ENCODE measurements at regions of chr2 and their contacts with region 1.

Region 1: DNA sequence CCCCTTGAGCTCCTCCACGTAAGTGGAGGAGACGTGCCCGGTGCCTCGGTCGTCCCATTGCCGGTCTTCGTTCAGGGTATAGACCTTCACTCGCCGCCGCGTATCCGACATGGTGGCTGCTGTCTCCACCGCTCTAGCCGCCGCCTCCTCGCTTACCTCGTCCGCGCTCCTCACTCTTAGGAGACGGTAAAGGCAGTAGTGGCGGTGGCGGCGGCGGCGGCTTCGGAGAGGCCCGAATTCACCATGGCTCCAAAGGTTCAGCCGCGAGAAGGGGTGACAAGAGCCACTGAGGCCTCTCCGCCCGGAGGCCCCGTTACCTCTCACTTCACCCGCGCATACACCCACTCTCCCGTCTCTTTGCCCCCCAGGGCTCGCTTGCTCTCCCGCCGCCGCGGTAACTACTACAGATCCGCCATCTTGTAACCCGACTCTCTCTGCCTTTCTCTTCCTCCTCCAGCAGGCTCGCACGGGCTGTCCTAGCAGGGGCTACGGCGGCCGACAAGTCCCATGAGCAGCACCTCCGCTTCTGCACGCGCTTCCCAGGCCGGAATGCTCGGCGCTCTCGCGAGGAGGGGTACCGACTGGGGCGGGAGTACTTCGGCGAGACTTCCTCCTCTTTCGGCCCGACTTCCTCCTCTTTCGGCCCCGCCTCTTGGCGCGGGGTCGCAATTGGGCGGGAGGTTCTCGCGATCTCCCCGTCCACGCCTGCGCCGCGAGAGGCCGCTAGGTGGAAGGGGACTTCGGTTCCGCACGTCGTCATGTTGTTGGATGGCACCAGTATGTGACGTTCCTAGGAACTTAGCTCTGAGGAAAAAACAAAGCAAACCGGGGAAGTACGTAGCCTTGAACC is at the start of gene PPP4R3B:
- DNase-seq: peak; percentile 98
- ATAC-seq: peak; percentile 84
- H3K4me3 ChIP-seq: peak within 1 kb of the TSS; percentile 81 to 87
- H3K27ac ChIP-seq: peak within 1 kb of the TSS; percentile 88
- H3K4me1 ChIP-seq: peaks cover 5 to 11% of the 10 kb centered on the region in 2 experiments
- H3K27me3 ChIP-seq: no peaks in the 10 kb centered on the region
- CTCF ChIP-seq: peak in 1 of 3 experiments; percentile 30; a peak in 1 of 6 replicates
- POLR2A ChIP-seq: peak; percentile 71
- RAD21 ChIP-seq: no peak
- total RNA-seq, gene PPP4R3B: 40.8 TPM

Region 2: GRCh38 chr2:55232084-55232862 is 385.1 kb before region 1 on chr2 and contains the starts of genes CLHC1 and RPS27A:
- CTCF ChIA-PET with region 1: no interaction called
- POLR2A ChIA-PET with region 1: no interaction called
- RAD21 ChIA-PET with region 1: no interaction called
- intact Hi-C with region 1: loop called (anchors 2 kb)
- DNase-seq: peak; percentile 98
- ATAC-seq: peak; percentile 89
- H3K4me3 ChIP-seq: peak within 1 kb of the TSS; percentile 77 to 91
- H3K27ac ChIP-seq: peak within 1 kb of the TSS; percentile 98
- H3K4me1 ChIP-seq: peaks cover 8 to 21% of the 10 kb centered on the region in 2 experiments
- H3K27me3 ChIP-seq: no peaks in the 10 kb centered on the region
- CTCF ChIP-seq: no peak
- POLR2A ChIP-seq: peak; percentile 73
- RAD21 ChIP-seq: no peak
- total RNA-seq, gene CLHC1: 11.1 TPM
- total RNA-seq, gene RPS27A: 1,291 TPM

Region 3: DNA sequence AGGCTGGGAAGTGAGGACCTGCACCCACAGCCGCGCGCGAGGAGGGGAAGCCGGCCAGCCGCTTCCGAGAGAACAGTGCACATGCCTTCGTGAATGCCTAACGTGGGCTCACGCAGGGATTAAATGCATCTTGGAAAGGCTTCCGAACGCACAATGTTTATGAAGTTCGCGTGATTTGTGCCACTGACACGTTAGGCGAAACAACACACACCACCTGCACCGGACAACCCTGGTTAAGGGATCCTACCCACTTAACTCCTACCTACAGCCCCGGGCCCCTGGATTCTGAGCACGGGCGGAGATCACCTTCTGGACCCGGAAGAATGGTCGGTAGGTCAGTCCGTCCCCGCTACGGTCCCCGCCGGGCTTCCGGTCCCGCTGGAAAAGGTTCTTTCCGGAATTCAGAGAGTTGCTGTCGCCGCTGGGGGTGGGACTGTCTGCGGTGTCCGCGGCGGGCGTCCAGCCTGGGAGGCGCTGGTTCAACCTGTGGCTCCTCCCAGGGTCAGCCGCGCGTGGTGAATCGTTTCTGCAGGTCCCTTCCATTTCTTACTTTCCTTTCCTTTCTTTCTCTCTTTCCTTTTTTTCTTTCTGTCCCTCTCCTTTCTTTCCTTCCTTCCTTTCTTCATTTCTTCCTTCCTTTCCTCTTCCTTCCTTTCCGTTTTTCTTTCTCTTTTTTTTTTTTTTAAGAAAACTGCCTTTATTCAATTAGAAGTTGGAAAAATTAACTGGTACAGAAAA is 348.3 kb before region 1 on chr2 and contains the start of gene MTIF2:
- CTCF ChIA-PET with region 1: no interaction called
- POLR2A ChIA-PET with region 1: no interaction called
- RAD21 ChIA-PET with region 1: no interaction called
- intact Hi-C with region 1: loop called (anchors 2 kb)
- DNase-seq: peak; percentile 90
- ATAC-seq: peak; percentile 98
- H3K4me3 ChIP-seq: peak within 1 kb of the TSS; percentile 92 to 97
- H3K27ac ChIP-seq: peak within 1 kb of the TSS; percentile 65
- H3K4me1 ChIP-seq: peaks cover 0 to 11% of the 10 kb centered on the region in 2 experiments; a peak in 1 of 4 replicates
- H3K27me3 ChIP-seq: no peaks in the 10 kb centered on the region
- CTCF ChIP-seq: peak in 1 of 3 experiments; percentile 11; a peak in 1 of 6 replicates
- POLR2A ChIP-seq: peak; percentile 92
- RAD21 ChIP-seq: peak; percentile 36; the same call in 1 of the 2 replicates
- total RNA-seq, gene MTIF2: 49.8 TPM

Region 4: DNA sequence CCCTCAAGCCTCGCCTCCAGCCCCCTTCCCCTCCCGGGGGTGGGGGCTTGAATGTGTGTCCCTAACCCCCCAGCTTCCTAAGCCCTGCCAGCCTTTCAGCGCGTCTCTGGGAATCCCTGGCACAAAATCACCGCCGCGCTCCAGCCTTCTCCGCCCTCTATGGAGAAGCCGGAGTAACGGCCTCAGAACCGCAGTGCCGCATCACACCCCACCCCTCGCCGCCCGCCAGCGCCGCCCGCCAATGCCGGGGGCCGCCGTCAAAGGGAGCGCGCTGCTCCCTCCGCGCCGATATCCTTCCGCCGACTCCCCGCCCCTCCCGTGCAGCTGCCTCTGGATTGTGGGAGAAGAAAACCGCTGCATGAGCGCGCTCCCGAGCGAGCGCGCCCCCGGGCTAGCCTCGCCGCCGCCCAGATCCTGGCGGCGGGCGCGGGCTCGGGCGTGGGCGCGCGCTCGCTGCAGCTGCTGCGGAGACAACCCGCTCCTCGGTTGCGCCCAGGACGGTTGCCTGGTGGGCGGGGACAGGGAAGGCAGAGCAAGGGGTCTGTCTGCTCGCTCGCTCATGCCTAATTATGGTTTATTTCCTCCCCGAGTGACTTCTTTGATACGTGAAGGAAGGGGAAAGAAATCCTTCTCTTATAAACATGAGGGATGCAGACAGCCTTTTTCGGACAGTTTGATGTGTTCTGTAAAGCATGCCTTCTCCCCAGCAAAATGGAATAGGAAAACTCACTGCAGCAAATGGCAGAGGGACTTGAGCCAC is 197.5 kb before region 1 on chr2 and contains the start of gene CCDC88A:
- CTCF ChIA-PET with region 1: no interaction called
- POLR2A ChIA-PET with region 1: no interaction called
- RAD21 ChIA-PET with region 1: no interaction called
- intact Hi-C with region 1: loop called (anchors 5 kb)
- DNase-seq: peak; percentile 91
- ATAC-seq: peak; percentile 86
- H3K4me3 ChIP-seq: peak within 1 kb of the TSS; percentile 71 to 76
- H3K27ac ChIP-seq: peak within 1 kb of the TSS; percentile 63
- H3K4me1 ChIP-seq: peaks cover 4 to 16% of the 10 kb centered on the region in 2 experiments; a peak in 2 of 4 replicates
- H3K27me3 ChIP-seq: no peaks in the 10 kb centered on the region
- CTCF ChIP-seq: 0 out of 6 replicates have a peak, but pooled peaks of 1 of the 3 experiments have one; percentile 10
- POLR2A ChIP-seq: peak; percentile 89
- RAD21 ChIP-seq: peak; percentile 31; the same call in 1 of the 2 replicates
- total RNA-seq, gene CCDC88A: 27.2 TPM

Region 5: DNA sequence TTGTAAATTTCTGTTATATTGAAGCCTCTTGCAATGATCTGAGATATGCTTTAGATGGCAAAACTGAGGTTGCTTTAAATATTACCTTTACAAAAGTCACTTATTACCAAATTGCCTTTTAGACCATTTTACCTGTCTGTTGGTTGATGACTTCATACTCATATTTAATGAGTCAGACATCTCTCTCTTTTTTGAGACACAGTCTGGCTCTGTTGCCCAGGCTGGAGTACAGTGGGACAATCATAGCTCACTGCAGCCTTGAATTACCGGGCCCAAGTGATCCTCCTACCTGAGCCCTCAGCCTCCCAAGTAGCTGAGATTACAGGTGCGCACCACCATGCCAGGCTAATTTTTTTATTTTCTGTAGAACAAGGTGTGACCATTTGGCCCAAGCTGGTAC is 11.5 kb after region 1 on chr2:
- CTCF ChIA-PET with region 1: no interaction called
- POLR2A ChIA-PET with region 1: no interaction called
- RAD21 ChIA-PET with region 1: no interaction called
- intact Hi-C with region 1: no loop called
- DNase-seq: no peak
- ATAC-seq: no peak
- H3K4me3 ChIP-seq: no peak overlapping the region
- H3K27ac ChIP-seq: no peak overlapping the region
- H3K4me1 ChIP-seq: no peaks in the 10 kb centered on the region
- H3K27me3 ChIP-seq: no peaks in the 10 kb centered on the region
- CTCF ChIP-seq: no peak
- POLR2A ChIP-seq: no peak
- RAD21 ChIP-seq: no peak

Region 6: GRCh38 chr2:55948176-55948921 is 330.9 kb after region 1 on chr2:
- CTCF ChIA-PET with region 1: no interaction called
- POLR2A ChIA-PET with region 1: no interaction called
- RAD21 ChIA-PET with region 1: no interaction called
- intact Hi-C with region 1: no loop called
- DNase-seq: no peak
- ATAC-seq: no peak
- H3K4me3 ChIP-seq: no peak overlapping the region
- H3K27ac ChIP-seq: no peak overlapping the region
- H3K4me1 ChIP-seq: no peaks in the 10 kb centered on the region
- H3K27me3 ChIP-seq: no peaks in the 10 kb centered on the region
- CTCF ChIP-seq: no peak
- POLR2A ChIP-seq: no peak
- RAD21 ChIP-seq: no peak